GM10248 (cell line): ENCODE measurements at regions of chr17 and their contacts with region 1.

Region 1: DNA sequence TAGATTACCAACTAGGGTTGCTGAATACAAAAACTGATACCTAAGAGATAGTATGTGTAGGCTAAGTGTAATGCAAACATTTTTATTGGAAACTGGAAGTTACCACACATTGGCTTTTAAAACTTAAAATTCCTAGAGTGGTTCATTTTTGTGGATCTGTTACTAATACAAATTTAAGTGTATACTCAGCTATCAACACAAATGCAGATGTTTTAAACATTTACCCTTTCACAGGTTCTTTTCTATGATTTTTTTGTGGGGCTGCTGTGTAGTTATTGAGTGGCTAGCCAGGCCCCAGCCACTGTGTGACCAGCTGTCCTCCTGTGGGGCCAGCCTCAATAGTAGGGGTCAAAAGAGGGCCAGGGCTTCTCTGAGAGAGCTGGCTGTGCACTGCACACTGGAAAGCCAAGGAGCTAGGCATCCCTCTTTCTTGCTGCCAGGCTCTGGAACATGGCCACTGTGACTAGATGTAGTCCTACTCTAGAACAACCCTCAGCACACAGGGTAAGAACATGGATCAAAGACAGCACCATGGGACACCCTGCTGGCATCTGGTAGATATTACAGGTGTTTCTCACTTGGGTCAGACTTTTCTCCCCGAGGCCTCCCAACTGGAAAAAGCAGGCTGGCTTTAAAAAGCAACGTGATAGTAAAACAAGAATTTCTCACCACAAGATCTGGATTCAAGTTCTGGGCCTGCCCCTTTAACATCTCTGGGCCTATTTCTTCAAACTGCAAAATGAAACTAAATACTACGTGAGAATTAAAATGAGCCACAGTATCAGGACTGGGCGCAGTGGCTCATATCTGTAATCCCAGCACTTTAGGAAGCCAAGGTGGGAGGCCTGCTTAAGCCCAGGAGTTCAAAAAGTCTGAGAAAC is 7.3 kb upstream of the VEZF1 start:
- DNase-seq: peak; percentile 64
- CTCF ChIP-seq: peak; percentile 62

Region 2: GRCh38 chr17:57567251-57567650 is 428.1 kb before region 1 on chr17:
- CTCF ChIA-PET with region 1: no interaction called
- POLR2A ChIA-PET with region 1: no interaction called
- DNase-seq: no peak
- CTCF ChIP-seq: no peak

Region 3: DNA sequence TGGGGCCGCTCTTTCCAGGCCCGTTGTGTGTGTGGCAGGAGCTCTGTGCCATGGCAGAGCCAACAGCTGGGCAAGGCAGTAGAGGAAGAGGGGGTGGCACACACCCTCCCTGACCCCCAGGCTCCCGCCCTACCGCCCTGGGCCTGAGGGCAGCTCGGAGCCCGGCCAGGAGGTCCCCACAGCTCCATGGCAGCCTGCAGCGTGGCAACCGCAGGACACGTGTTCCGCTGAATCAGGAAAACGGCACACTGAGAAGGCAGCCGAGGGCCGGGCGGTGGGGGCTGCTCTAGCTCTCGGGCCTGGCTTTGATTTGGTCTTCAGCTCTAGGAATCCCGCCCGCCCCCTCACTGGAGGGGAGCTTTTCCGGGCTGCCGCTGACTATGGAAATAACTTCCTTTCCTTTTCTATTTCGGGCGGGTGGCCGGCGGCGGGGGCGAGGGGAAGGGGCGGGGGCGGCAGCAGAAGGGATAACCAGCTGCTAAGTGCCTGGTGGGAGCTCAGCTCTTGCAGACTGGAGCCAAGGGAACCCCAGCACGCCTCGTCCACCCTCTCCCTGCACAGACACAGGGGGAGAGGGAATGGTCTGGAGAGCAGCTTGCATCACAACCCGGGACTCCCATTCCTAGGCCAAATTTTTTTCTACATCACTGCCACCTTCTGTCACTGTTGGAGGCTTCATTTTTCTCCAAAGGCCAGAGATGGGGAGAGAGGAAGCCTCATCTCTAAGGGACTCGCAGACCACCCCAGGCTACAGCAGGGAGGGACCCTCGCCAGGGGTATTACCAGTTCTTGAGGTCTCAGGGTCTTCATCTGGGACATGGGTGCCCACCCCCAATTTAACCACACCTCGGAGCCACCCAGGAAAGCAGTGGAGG is 120.6 kb before region 1 on chr17:
- CTCF ChIA-PET with region 1: interaction called, 478 read pairs
- POLR2A ChIA-PET with region 1: no interaction called
- DNase-seq: peak; percentile 62
- CTCF ChIP-seq: no peak

Region 4: GRCh38 chr17:57892146-57892828 is 103.0 kb before region 1 on chr17:
- CTCF ChIA-PET with region 1: interaction called, 44 read pairs
- POLR2A ChIA-PET with region 1: no interaction called
- DNase-seq: peak; percentile 88
- CTCF ChIP-seq: peak; percentile 99

Region 5: GRCh38 chr17:57939797-57940196 is 55.5 kb before region 1 on chr17:
- CTCF ChIA-PET with region 1: interaction called, 15 read pairs
- POLR2A ChIA-PET with region 1: interaction called, 6 read pairs
- DNase-seq: peak; percentile 77
- CTCF ChIP-seq: no peak

Region 6: DNA sequence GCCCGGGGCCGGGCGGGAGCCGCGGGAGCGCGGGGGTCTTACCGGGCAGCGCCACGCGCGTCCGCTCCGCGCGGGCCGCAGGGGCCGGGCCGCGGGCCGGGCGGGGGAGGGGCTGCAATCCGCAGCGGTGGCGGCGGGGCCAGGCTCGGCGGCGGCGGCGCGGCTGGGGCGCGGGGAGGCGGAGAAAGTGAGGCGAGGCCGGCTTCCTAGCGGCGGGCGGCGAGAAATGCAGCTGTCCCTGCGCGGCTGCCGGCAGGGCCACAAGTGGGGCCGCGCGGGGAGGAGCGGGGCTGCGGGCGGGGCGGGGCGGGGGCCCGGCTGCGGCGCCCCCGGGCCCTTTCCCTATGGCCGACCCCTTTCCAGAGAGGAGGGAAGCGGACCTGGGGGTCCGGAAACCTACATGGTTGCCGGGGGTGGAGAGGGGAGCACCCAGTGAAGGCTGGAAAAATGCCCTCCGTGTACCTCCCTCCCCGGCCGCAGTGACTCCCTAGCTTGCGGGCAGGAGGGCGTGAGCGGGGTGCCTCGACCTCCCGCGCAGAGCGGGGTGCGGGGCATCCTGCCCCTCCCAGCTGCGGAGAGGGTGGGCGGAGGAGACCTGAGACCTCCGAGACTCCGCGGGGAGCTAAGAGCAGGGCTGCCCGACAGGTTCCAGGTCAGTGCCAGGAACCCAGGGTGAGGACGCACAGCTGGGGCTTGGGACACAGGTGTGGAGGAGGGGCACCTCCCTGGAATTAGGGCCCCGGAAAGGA is 40.0 kb before region 1 on chr17 and contains the start of gene CUEDC1:
- CTCF ChIA-PET with region 1: interaction called, 25 read pairs
- POLR2A ChIA-PET with region 1: no interaction called
- DNase-seq: peak; percentile 83
- CTCF ChIP-seq: peak; percentile 34

Region 7: GRCh38 chr17:58006924-58007780 is 11.8 kb after region 1 on chr17 and contains the start of gene SRSF1:
- CTCF ChIA-PET with region 1: interaction called, 89 read pairs
- POLR2A ChIA-PET with region 1: interaction called, 16 read pairs
- DNase-seq: peak; percentile 96
- CTCF ChIP-seq: no peak

Region 8: GRCh38 chr17:58032691-58033415 is 37.5 kb after region 1 on chr17:
- CTCF ChIA-PET with region 1: no interaction called
- POLR2A ChIA-PET with region 1: no interaction called
- DNase-seq: no peak
- CTCF ChIP-seq: no peak